Transverse colon (tissue), 4 donors: ENCODE measurements at regions of chr7 and their contacts with region 1.

Region 1: DNA sequence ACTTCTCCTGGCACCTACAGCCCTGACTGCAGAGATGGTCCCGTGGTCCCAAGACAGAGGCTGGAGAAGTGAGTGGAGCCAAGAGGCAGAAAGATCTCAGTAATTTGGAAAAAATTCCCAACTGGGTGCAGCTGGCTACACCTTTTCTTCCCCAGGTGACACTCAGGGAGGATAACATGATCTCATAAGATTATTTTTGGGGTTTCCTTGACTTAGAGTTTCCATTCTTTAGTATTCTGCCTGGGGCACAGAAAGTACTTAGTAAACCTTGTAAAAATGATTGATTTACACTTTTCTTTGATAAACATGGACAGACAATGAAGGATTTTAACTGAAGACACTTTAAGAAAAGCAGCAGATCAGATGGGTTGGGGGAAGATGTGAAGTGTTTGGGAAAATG is 38.6 kb downstream of the HECW1 start:
- DNase-seq: no peak
- H3K4me3 ChIP-seq: no peak overlapping the region
- H3K27ac ChIP-seq: no peak overlapping the region
- H3K4me1 ChIP-seq: no peaks in the 10 kb centered on the region
- H3K27me3 ChIP-seq: no peaks in the 10 kb centered on the region
- CTCF ChIP-seq: no peak
- EP300 ChIP-seq: no peak
- POLR2A ChIP-seq: no peak

Region 2: GRCh38 chr7:42700406-42701327 is 450.4 kb before region 1 on chr7:
- in situ Hi-C with region 1: no loop called
- intact Hi-C with region 1: no loop called
- DNase-seq: no peak
- H3K4me3 ChIP-seq: no peak overlapping the region
- H3K27ac ChIP-seq: peak overlapping the region in 2 of 4 donors; percentile 16 to 56
- H3K4me1 ChIP-seq: peaks cover 0 to 25% (median 2%) of the 10 kb centered on the region in 4 donors
- H3K27me3 ChIP-seq: no peaks in the 10 kb centered on the region
- CTCF ChIP-seq: no peak
- EP300 ChIP-seq: no peak
- POLR2A ChIP-seq: no peak

Region 3: GRCh38 chr7:43130347-43130746 is 20.7 kb before region 1 on chr7:
- in situ Hi-C with region 1: no loop called
- intact Hi-C with region 1: loop called (anchors 1 kb)
- DNase-seq: no peak
- H3K4me3 ChIP-seq: no peak overlapping the region
- H3K27ac ChIP-seq: no peak overlapping the region
- H3K4me1 ChIP-seq: no peaks in the 10 kb centered on the region
- H3K27me3 ChIP-seq: no peaks in the 10 kb centered on the region
- CTCF ChIP-seq: no peak
- EP300 ChIP-seq: no peak
- POLR2A ChIP-seq: no peak

Region 4: GRCh38 chr7:43265139-43265538 is 114.1 kb after region 1 on chr7:
- in situ Hi-C with region 1: no loop called
- intact Hi-C with region 1: no loop called
- DNase-seq: no peak
- H3K4me3 ChIP-seq: no peak overlapping the region
- H3K27ac ChIP-seq: no peak overlapping the region
- H3K4me1 ChIP-seq: no peaks in the 10 kb centered on the region
- H3K27me3 ChIP-seq: no peaks in the 10 kb centered on the region
- CTCF ChIP-seq: no peak
- EP300 ChIP-seq: no peak
- POLR2A ChIP-seq: no peak

Region 5: DNA sequence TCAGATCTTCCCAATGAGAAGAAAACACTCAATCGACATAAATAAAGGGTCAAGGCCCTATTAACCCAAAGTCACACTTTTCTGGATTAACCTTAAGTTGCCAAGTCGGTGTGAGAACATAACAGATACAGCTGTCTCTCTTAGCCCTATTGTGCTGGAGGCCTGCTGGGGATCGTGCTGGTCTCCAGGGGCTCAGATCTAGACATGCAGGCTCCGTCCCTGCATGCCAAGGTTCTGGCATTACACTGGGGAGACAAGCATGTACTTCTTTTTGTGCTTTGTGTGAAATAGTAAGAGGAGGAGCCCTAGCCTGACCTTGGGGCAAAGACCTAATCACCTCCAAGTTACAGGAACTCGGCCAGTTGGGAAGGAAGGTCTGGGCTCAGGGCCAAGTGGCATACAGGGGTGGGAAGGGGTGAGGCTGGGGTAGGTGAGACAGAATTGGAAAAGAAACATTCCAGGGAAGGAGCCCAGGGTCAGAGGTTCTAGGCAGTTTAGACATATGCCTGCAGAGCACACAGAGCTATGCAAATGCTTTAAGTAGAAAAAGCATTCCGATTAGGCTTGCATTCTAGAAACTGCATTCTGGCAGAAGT is 177.8 kb after region 1 on chr7:
- in situ Hi-C with region 1: no loop called
- intact Hi-C with region 1: no loop called
- DNase-seq: no peak
- H3K4me3 ChIP-seq: no peak overlapping the region
- H3K27ac ChIP-seq: no peak overlapping the region
- H3K4me1 ChIP-seq: no peaks in the 10 kb centered on the region
- H3K27me3 ChIP-seq: no peaks in the 10 kb centered on the region
- CTCF ChIP-seq: no peak
- EP300 ChIP-seq: no peak
- POLR2A ChIP-seq: no peak